PC-9 (cell line): ENCODE measurements at regions of chr2 and their contacts with region 1.

Region 1: DNA sequence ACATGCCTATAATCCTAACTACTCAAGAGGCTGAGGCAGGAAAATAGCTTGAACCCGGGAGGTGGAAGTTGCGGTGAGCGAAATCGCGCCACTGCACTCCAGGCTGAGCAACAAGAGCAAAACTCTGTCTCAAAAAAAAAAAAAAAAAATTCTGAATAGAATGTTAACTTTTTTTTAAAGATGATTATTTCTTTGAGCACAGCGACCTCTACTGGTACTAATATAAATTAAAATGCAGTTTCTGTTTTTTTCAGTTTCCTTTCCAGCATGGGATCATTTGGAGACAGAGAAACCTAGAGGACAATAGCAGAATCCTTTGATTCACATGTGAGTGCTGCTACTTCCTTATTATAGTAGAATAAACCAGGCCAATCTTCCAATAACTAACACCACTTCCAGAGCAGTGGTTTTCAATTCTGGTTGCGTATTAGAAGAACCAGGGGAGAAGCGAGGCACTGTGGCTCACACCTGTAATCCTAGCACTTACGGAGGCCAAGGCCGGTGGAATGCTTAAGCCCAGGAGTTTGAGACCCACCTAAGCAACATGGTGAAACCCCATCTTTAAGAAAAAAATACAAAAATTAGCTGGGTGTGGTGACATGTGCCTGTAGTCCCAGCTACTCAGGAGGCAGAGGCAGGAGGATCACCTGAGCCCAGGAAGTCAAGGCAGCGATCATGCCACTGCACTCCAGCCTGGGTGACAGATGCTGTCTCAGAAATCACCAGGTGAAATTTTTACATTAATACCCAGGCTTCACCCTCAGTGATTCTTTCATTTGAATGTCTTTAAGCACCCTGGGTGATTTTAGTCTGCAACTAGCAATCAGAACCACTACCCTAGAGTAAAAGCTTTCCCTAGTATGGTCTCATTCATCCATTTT is 10.1 kb downstream of the SRSF7 start:
- DNase-seq: peak in 1 of 2 experiments; percentile 76
- H3K4me3 ChIP-seq: no peak overlapping the region
- H3K27ac ChIP-seq: 0 out of 2 replicates have a peak overlapping the region, but pooled peaks have one; percentile 2
- H3K4me1 ChIP-seq: no peaks in the 10 kb centered on the region
- H3K27me3 ChIP-seq: no peaks in the 10 kb centered on the region
- CTCF ChIP-seq: peak; percentile 85

Region 2: DNA sequence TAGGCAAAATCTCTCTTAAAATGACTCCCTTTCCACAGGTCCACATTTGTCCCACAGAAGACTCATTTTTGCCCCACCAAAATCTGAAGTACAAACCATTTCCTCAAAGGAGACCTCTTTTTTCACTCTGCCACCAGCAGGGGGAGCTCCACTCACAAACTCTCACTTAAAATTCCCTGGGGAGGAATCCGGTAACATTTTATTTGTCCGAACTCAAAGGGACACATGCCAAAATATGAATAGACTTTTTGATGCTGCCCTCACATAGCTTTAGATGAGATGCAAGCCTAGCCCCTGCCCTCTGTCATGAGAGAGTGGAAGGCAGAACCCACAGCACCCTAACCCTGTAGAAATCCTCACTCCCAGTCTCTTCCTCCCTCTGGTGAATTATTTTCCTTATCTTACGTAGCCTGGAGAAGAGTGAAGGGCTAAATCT is 758.9 kb before region 1 on chr2:
- CTCF ChIA-PET with region 1: no interaction called
- POLR2A ChIA-PET with region 1: no interaction called
- intact Hi-C with region 1: loop called (anchors 5 kb)
- DNase-seq: peak; percentile 48 to 61
- H3K4me3 ChIP-seq: no peak overlapping the region
- H3K27ac ChIP-seq: no peak overlapping the region
- H3K4me1 ChIP-seq: peaks cover 12% of the 10 kb centered on the region
- H3K27me3 ChIP-seq: no peaks in the 10 kb centered on the region
- CTCF ChIP-seq: peak; percentile 96

Region 3: DNA sequence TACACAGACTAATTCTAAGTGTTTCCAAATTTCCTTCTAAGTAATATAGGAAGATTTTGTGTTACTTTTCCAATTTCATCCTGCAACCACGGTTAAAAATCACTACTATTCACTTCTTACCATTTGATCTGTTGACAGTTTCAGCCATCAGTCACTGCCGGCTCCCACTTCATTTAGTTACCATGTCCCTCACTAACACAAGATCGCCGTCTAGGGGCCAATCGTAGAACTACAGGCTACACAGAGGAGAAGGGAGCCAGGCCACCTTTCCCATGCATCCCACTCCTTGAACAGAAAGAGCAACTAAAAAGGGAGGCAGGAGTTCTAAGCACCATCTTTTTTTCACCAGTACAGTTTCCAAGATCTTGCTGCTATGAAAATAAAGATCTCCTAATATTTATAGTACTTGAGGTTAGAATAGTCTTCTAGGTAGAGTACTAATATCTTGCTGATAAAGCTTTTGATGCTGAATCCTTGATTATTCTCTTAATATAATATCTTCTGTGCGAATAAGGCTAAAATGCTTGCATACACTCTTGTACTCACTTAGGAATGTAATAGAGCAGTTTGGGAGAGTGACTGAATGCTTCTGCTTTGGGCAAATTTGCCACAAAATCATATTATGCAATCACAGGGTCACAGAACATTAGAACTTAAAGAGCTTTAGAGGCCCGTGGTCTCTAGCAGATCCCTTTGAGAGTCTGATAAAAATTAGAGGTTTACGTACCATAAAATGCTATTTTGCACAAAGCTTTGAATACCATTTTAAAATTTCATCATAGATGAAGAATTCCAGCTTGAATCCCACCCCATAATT is 625.7 kb before region 1 on chr2:
- CTCF ChIA-PET with region 1: no interaction called
- POLR2A ChIA-PET with region 1: no interaction called
- intact Hi-C with region 1: no loop called
- DNase-seq: peak; percentile 69 to 86
- H3K4me3 ChIP-seq: no peak overlapping the region
- H3K27ac ChIP-seq: peak overlapping the region; percentile 42
- H3K4me1 ChIP-seq: peaks cover 44% of the 10 kb centered on the region
- H3K27me3 ChIP-seq: no peaks in the 10 kb centered on the region
- CTCF ChIP-seq: peak; percentile 100

Region 4: GRCh38 chr2:38394903-38395341 is 346.2 kb before region 1 on chr2:
- CTCF ChIA-PET with region 1: no interaction called
- POLR2A ChIA-PET with region 1: interaction called, 24 read pairs
- intact Hi-C with region 1: no loop called
- DNase-seq: peak; percentile 37 to 96
- H3K4me3 ChIP-seq: no peak overlapping the region; the same call in 1 of the 2 replicates
- H3K27ac ChIP-seq: peak overlapping the region; percentile 81
- H3K4me1 ChIP-seq: peaks cover 33% of the 10 kb centered on the region
- H3K27me3 ChIP-seq: no peaks in the 10 kb centered on the region
- CTCF ChIP-seq: no peak

Region 5: GRCh38 chr2:38581193-38582147 is 159.6 kb before region 1 on chr2:
- CTCF ChIA-PET with region 1: interaction called, 3 read pairs
- POLR2A ChIA-PET with region 1: no interaction called
- intact Hi-C with region 1: loop called (anchors 5 kb)
- DNase-seq: peak in 1 of 2 experiments; percentile 56
- H3K4me3 ChIP-seq: no peak overlapping the region
- H3K27ac ChIP-seq: no peak overlapping the region
- H3K4me1 ChIP-seq: no peaks in the 10 kb centered on the region
- H3K27me3 ChIP-seq: no peaks in the 10 kb centered on the region
- CTCF ChIP-seq: peak; percentile 90

Region 6: DNA sequence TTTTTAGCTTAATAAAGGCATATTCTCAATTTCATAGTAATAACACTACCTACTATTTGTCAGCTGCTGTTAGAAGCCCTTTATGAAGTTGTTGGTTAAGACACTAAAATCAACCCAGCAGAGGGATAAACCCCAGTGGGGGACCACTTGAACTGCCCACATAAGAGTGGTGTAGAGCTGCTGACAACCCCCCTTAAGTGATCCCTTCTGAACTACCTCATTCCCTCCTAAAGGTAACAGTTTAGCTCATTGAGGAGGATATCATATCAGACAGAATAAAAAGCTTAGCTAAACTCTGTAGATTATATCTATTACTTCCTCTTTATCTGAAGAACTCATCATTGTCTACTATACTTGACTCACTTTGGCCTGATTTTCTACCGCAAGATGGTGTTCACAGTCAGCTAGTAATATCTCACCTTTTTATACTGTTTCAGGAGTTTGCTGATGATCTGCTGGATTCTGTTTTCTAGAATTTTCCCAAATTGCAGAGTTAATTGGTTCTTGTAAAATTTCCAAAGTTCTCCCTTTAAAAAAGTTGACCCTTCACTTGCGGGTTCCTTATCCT is 59.0 kb before region 1 on chr2:
- CTCF ChIA-PET with region 1: no interaction called
- POLR2A ChIA-PET with region 1: no interaction called
- intact Hi-C with region 1: no loop called
- DNase-seq: no peak
- H3K4me3 ChIP-seq: no peak overlapping the region
- H3K27ac ChIP-seq: no peak overlapping the region
- H3K4me1 ChIP-seq: peaks cover 5% of the 10 kb centered on the region; the same call in 1 of the 2 replicates
- H3K27me3 ChIP-seq: no peaks in the 10 kb centered on the region
- CTCF ChIP-seq: no peak

Region 7: DNA sequence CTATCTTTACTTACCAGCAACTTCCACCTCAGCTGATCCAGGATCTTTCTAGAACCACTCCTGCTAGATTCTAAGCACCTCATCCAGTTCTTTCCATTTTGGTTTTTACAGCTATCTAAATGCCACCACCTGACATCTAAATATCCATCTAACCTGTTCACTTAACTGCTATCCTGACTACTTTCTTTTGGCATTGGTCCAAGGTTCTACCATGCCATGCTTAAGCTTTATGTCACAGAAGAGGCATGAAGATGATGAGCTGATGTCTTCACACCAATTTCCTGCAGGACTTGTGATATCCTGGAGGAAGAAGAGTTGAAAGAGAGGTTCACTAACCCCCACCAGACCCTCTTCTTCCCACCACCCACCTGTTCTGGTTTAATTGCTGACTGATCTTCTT is 213.9 kb after region 1 on chr2:
- CTCF ChIA-PET with region 1: no interaction called
- POLR2A ChIA-PET with region 1: no interaction called
- intact Hi-C with region 1: no loop called
- DNase-seq: no peak
- H3K4me3 ChIP-seq: no peak overlapping the region
- H3K27ac ChIP-seq: no peak overlapping the region
- H3K4me1 ChIP-seq: no peaks in the 10 kb centered on the region
- H3K27me3 ChIP-seq: no peaks in the 10 kb centered on the region
- CTCF ChIP-seq: no peak